ENCODE measurements at regions of chr12 and their contacts with region 1.

Region 1: GRCh38 chr12:53295070-53295890 is at the start of gene PFDN5:
- DNase-seq: peak; percentile 76 to 96 (median 86)
- ATAC-seq: peak; percentile 92
- H3K4me3 ChIP-seq: peak within 1 kb of the TSS; percentile 69
- H3K4me3 Mint-ChIP-seq: peak within 1 kb of the TSS; percentile 99
- H3K27ac ChIP-seq: peak within 1 kb of the TSS; percentile 69 to 71
- H3K27ac Mint-ChIP-seq: peak within 1 kb of the TSS; percentile 97
- H3K4me1 ChIP-seq: peaks cover 38% of the 10 kb centered on the region
- H3K4me1 Mint-ChIP-seq: peaks cover 50% of the 10 kb centered on the region
- H3K27me3 ChIP-seq: no peaks in the 10 kb centered on the region
- H3K27me3 Mint-ChIP-seq: no peaks in the 10 kb centered on the region
- CTCF ChIP-seq: no peak
- total RNA-seq, gene PFDN5: 757 to 763 TPM

Region 2: DNA sequence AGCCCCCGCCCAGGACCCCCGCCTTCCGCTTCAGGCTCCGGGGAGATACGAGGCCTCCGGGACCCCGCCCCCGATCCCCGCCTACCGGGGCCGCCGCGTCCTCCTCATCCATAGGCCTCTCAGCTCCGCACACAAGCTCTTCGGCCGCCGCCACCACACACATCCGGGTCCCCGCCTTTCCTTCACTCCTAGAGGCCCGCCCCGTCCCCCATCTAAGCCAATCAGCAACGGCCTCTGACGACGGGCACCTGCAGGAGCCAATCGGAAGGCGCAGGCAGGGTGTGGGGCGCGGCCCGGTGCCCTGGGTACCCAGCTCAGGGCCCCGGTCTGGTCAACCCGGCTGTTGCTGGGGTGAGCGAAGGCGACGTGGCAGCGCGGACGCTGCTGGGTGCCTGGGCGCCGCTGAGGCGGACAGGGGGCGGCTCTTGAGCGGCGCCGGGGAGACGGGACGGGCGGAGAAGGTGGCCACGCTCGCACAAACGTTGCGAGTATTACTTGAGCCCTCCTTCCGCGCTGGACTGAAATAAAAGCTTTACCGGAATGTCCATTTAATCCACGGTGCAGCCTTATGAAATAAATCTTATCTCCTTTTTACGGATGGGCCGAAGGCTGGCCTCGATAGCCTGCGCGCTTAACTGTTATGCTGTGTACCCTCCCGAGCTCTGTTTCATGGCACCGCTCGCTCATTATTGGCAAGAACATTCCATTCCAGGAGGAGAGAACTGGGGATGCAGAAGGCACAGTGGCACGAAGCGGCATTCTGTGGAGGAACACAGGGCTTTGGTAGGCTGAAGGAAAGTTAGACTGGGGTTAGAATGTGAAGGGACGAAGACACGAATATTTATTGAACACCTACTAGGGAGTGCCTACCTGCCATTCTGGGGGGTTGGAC is 215.8 kb before region 1 on chr12 and contains the start of gene SPRYD3:
- CTCF ChIA-PET with region 1: no interaction called
- POLR2A ChIA-PET with region 1: interaction called, 16 read pairs
- intact Hi-C with region 1: no loop called
- DNase-seq: peak; percentile 94 to 98 (median 96)
- ATAC-seq: peak; percentile 94
- H3K4me3 ChIP-seq: peak within 1 kb of the TSS; percentile 72
- H3K4me3 Mint-ChIP-seq: peak within 1 kb of the TSS; percentile 95
- H3K27ac ChIP-seq: peak within 1 kb of the TSS; percentile 82 to 85
- H3K27ac Mint-ChIP-seq: peak within 1 kb of the TSS; percentile 98
- H3K4me1 ChIP-seq: peaks cover 34% of the 10 kb centered on the region
- H3K4me1 Mint-ChIP-seq: peaks cover 40% of the 10 kb centered on the region
- H3K27me3 ChIP-seq: no peaks in the 10 kb centered on the region
- H3K27me3 Mint-ChIP-seq: no peaks in the 10 kb centered on the region
- CTCF ChIP-seq: no peak
- total RNA-seq, gene SPRYD3: 17.7 to 21.0 TPM

Region 3: DNA sequence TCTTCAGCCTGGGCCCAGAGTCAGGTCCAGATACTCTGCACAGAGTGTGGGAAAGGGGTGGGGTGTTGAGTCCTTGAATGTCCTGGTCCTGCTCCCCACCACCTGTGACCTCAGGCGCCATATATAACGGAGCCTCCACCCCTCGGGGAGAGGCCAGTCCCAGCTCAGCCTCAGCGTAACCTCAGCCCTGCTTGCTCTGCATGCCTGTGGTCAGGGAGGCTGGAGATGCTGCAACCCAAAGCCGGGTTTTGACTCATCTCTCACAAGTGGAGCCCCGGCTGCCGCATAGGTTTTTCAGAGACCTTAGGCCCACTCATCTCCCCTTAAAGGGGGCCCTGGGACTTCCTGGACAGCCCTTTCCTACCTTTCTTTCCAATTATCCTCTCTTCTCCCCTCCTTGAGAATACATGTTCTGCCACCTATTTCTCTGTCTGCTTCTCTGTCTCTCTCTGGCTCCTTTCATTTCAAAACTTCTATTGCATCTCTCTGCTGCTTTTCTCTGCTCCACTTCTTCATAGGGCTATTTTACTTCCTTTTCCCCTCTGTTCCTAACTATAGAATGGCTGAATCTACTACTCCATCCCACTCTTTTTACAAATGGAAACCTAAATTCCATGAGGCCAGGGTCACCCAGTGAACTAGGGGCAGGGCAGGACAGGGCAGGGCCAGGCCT is 89.4 kb before region 1 on chr12:
- CTCF ChIA-PET with region 1: no interaction called
- POLR2A ChIA-PET with region 1: interaction called, 10 read pairs
- intact Hi-C with region 1: no loop called
- DNase-seq: peak in 11 of 14 experiments; percentile 31 to 75 (median 55)
- ATAC-seq: peak; percentile 43
- H3K4me3 ChIP-seq: peak overlapping the region; percentile 84
- H3K4me3 Mint-ChIP-seq: peak overlapping the region; percentile 84
- H3K27ac ChIP-seq: peak overlapping the region; percentile 70 to 82
- H3K27ac Mint-ChIP-seq: peak overlapping the region; percentile 73
- H3K4me1 ChIP-seq: peaks cover 90% of the 10 kb centered on the region
- H3K4me1 Mint-ChIP-seq: peaks cover 72% of the 10 kb centered on the region
- H3K27me3 ChIP-seq: no peaks in the 10 kb centered on the region
- H3K27me3 Mint-ChIP-seq: no peaks in the 10 kb centered on the region
- CTCF ChIP-seq: no peak

Region 4: DNA sequence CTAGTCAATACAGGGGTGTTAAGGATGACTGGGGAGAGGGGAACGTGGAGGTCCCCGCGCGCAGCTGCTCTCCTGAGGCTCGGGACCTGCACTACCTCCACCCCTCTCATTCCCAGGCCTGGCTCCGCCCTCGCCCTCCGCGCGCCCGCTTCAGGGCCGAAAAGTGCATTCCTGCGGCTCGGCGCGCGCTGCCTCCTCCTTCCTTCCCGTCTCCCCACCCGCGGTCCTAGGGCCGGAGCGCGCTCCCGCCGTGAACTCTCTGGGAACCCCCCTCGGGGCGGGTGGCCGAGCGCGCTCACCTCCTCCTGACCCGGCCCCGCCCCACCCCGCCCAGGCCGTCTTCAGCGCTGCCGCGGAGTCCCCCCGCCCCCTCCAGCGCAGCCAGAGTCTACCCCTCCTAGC is 74.5 kb before region 1 on chr12:
- CTCF ChIA-PET with region 1: no interaction called
- POLR2A ChIA-PET with region 1: interaction called, 30 read pairs
- intact Hi-C with region 1: no loop called
- DNase-seq: peak; percentile 51 to 94 (median 70)
- ATAC-seq: peak; percentile 47
- H3K4me3 ChIP-seq: peak overlapping the region; percentile 77
- H3K4me3 Mint-ChIP-seq: peak overlapping the region; percentile 100
- H3K27ac ChIP-seq: peak overlapping the region; percentile 92 to 96
- H3K27ac Mint-ChIP-seq: peak overlapping the region; percentile 90
- H3K4me1 ChIP-seq: peaks cover 84% of the 10 kb centered on the region
- H3K4me1 Mint-ChIP-seq: peaks cover 86% of the 10 kb centered on the region
- H3K27me3 ChIP-seq: no peaks in the 10 kb centered on the region
- H3K27me3 Mint-ChIP-seq: no peaks in the 10 kb centered on the region
- CTCF ChIP-seq: no peak

Region 5: GRCh38 chr12:53344824-53345485 is 49.7 kb after region 1 on chr12:
- CTCF ChIA-PET with region 1: interaction called, 9 read pairs
- POLR2A ChIA-PET with region 1: interaction called, 15 read pairs
- intact Hi-C with region 1: no loop called
- DNase-seq: peak; percentile 51 to 85 (median 65)
- ATAC-seq: peak; percentile 80
- H3K4me3 ChIP-seq: peak overlapping the region; percentile 66
- H3K4me3 Mint-ChIP-seq: peak overlapping the region; percentile 93
- H3K27ac ChIP-seq: no peak overlapping the region
- H3K27ac Mint-ChIP-seq: peak overlapping the region; percentile 72
- H3K4me1 ChIP-seq: peaks cover 15% of the 10 kb centered on the region
- H3K4me1 Mint-ChIP-seq: peaks cover 21% of the 10 kb centered on the region
- H3K27me3 ChIP-seq: peaks cover 2 to 3% of the 10 kb centered on the region in 2 experiments
- H3K27me3 Mint-ChIP-seq: peaks cover 3% of the 10 kb centered on the region
- CTCF ChIP-seq: peak; percentile 81

Region 6: GRCh38 chr12:53543539-53543938 is 248.3 kb after region 1 on chr12:
- CTCF ChIA-PET with region 1: no interaction called
- POLR2A ChIA-PET with region 1: no interaction called
- intact Hi-C with region 1: no loop called
- DNase-seq: peak; percentile 12 to 77 (median 40)
- ATAC-seq: peak; percentile 98
- H3K4me3 ChIP-seq: no peak overlapping the region
- H3K4me3 Mint-ChIP-seq: no peak overlapping the region
- H3K27ac ChIP-seq: no peak overlapping the region
- H3K27ac Mint-ChIP-seq: peak overlapping the region; percentile 68
- H3K4me1 ChIP-seq: peaks cover 3% of the 10 kb centered on the region
- H3K4me1 Mint-ChIP-seq: peaks cover 19% of the 10 kb centered on the region
- H3K27me3 ChIP-seq: no peaks in the 10 kb centered on the region
- H3K27me3 Mint-ChIP-seq: no peaks in the 10 kb centered on the region
- CTCF ChIP-seq: peak; percentile 76

Measured in CD4-positive, alpha-beta T cell (primary cell).